AG04450 (cell line): ENCODE measurements at regions of chr7 and their contacts with region 1.

Region 1: DNA sequence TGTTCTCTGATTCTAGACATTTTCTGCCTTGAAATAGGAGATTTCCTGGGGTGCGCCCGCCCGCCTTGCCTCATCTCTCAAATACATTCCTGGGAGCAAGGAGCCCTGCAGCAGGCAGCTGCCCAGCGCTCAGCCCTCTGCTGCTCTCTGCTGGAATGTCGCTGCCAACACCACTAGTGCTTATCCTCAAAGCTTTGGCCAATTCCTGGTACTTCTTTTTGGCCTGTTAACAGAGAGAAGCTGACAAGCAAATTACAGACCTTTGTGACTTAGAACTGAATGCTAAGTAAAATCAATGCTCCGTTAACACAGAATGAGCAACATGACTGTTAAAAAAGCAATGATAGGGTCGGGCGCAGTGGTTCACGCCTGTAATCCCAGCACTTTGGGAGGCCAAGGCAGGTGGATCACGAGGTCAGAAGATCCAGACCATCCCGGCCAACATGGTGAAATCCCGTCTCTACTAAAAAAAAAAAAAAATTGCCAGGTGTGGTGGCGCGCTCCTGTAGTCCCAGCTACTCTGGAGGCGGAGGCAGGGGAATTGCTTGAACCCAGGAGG is 41.9 kb upstream of the SYPL1 start:
- DNase-seq: peak; percentile 59
- H3K4me3 ChIP-seq: no peak overlapping the region
- H3K27ac ChIP-seq: no peak overlapping the region
- H3K27me3 ChIP-seq: peaks cover 13% of the 10 kb centered on the region
- CTCF ChIP-seq: peak; percentile 99

Region 2: DNA sequence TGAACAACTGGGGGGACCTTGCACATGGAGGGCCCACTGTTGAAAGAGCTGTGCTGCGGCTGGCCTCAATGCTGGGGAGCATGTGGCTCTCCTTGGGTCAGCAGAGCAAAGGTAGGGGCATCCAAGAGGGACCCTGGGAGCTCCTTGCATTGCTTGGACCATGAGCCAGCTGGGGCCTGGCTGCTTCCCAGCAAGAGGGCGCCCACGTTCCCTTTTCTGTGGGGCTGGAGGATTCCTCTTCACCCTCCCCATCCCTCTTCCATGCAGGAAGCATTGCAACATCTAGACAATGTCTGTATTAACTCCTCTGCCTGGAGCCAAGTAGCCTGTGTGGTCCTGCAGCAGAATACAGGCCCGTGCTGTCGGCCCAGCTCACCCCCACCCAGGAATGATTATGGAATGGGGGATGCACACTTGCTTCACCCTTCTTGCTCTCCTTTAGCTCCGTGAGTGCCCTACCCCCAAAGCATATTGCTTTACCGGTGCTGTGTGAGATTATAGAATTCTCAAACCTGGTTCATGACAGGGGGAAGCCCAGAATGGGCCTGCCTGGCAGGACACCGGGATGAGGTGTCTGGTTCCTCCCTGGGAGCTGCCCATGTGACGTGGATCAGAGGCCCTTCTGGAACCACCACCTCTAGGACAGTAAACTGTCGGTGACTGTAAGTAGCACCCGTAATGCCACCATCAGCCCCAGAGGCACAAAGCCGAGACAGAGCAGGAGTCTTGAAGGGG is 103.8 kb before region 1 on chr7:
- CTCF ChIA-PET with region 1: interaction called, 153 read pairs
- POLR2A ChIA-PET with region 1: no interaction called
- DNase-seq: peak; percentile 38
- H3K4me3 ChIP-seq: no peak overlapping the region
- H3K27ac ChIP-seq: peak overlapping the region; percentile 42
- H3K27me3 ChIP-seq: peaks cover 17% of the 10 kb centered on the region
- CTCF ChIP-seq: peak; percentile 35

Region 3: GRCh38 chr7:106071356-106071998 is 82.5 kb before region 1 on chr7:
- CTCF ChIA-PET with region 1: interaction called, 10 read pairs
- POLR2A ChIA-PET with region 1: no interaction called
- DNase-seq: no peak
- H3K4me3 ChIP-seq: no peak overlapping the region
- H3K27ac ChIP-seq: no peak overlapping the region
- H3K27me3 ChIP-seq: peaks cover 2% of the 10 kb centered on the region
- CTCF ChIP-seq: no peak

Region 4: DNA sequence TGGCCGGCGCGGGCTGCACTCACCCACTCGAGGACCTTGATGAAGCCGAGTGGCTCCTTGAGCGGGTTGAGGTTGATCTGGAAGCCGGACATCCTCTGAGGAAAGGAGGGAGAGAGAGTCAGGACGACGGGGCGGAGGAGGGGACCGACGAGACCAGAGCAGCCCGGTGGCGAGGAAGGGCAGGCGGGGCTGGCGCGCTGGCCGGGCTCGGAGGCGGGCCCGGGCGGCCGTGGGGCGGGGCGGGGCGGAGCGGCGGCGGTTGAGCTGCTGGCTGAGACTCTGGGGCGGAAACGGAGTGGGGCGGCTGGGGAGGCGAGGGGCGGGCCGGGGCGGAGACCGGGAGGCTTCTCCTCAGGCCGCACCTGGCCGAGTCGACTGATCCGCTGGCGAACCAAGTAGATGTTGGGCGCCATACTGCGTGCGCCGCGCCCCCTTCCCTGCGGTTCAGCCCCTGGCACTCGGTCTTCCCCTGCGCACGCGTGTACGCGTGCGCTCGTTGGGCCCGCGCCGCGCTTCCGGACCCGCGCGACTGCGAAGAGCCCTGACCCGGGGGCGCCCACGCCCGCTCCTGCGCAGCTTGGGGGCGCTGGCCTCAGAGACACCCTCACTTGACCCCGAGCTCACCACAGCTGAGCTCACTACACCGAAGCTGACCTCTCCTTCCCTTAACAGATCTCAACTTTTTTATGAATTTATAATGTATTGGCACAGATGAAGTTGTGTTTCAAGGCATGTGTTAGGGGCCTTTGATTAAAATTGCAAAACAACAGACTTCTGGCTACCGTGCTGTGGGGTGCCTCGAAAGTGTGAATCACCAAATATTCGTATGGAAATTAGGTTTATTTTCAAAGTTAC is 41.6 kb before region 1 on chr7 and contains the start of gene SYPL1:
- CTCF ChIA-PET with region 1: interaction called, 12 read pairs
- POLR2A ChIA-PET with region 1: interaction called, 5 read pairs
- DNase-seq: peak; percentile 80
- H3K4me3 ChIP-seq: peak within 1 kb of the TSS; percentile 81
- H3K27ac ChIP-seq: peak within 1 kb of the TSS; percentile 94
- H3K27me3 ChIP-seq: peaks cover 2% of the 10 kb centered on the region
- CTCF ChIP-seq: no peak
- polyA plus RNA-seq, gene SYPL1: 66.4 and 84.7 TPM in 2 replicates

Region 5: DNA sequence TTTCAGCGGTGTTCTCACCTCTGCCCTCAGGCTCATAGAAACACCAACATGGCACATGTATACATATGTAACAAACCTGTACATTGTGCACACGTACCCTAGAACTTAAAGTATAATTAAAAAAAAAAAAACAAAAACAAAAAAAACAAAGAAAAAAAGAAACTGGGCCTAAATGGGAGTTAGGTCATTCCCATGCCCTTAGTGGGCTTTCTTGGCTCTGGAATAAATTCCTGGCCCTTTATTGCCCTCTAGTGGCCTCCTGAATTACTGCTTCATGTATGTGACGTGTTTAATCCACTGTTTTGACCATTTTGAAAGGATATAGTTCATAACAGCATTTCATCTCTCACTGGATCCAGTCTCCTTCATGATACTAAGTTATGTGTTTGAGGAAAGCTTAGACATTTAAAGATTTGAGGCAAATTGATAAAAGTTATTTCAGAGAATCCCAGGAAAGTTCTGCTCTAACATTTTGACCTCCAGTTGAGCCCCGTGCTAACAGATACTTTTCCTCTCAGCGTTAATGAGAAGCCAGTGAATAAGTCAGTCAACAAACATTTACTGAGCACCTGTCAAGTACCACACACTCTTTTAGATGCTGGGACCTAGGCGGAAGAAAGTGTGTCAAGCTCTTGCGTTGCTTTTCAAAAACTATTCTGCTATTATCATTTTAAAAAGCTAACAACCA is 12.8 kb after region 1 on chr7:
- CTCF ChIA-PET with region 1: interaction called, 51 read pairs
- POLR2A ChIA-PET with region 1: no interaction called
- DNase-seq: peak; percentile 66
- H3K4me3 ChIP-seq: no peak overlapping the region
- H3K27ac ChIP-seq: no peak overlapping the region
- H3K27me3 ChIP-seq: peaks cover 13% of the 10 kb centered on the region
- CTCF ChIP-seq: peak; percentile 84

Region 6: GRCh38 chr7:106196460-106197021 is 42.6 kb after region 1 on chr7:
- CTCF ChIA-PET with region 1: no interaction called
- POLR2A ChIA-PET with region 1: no interaction called
- DNase-seq: no peak
- H3K4me3 ChIP-seq: no peak overlapping the region
- H3K27ac ChIP-seq: no peak overlapping the region
- H3K27me3 ChIP-seq: peaks cover 2% of the 10 kb centered on the region
- CTCF ChIP-seq: no peak